ENCODE measurements at regions of chr4 and their contacts with region 1.

Region 1: GRCh38 chr4:69194166-69194565 is 20.4 kb downstream of the UGT2B11 start:
- DNase-seq: no peak
- ATAC-seq: no peak
- H3K4me3 ChIP-seq: no peak overlapping the region
- H3K4me3 Mint-ChIP-seq: no peak overlapping the region
- H3K27ac ChIP-seq: no peak overlapping the region
- H3K27ac Mint-ChIP-seq: no peak overlapping the region
- H3K4me1 ChIP-seq: no peaks in the 10 kb centered on the region
- H3K4me1 Mint-ChIP-seq: no peaks in the 10 kb centered on the region
- H3K27me3 ChIP-seq: no peaks in the 10 kb centered on the region
- H3K27me3 Mint-ChIP-seq: no peaks in the 10 kb centered on the region
- CTCF ChIP-seq: no peak

Region 2: GRCh38 chr4:68984947-68985346 is 209.2 kb before region 1 on chr4:
- CTCF ChIA-PET with region 1: no interaction called
- POLR2A ChIA-PET with region 1: no interaction called
- intact Hi-C with region 1: no loop called
- DNase-seq: no peak
- ATAC-seq: no peak
- H3K4me3 ChIP-seq: no peak overlapping the region
- H3K4me3 Mint-ChIP-seq: no peak overlapping the region
- H3K27ac ChIP-seq: no peak overlapping the region
- H3K27ac Mint-ChIP-seq: no peak overlapping the region
- H3K4me1 ChIP-seq: no peaks in the 10 kb centered on the region
- H3K4me1 Mint-ChIP-seq: no peaks in the 10 kb centered on the region
- H3K27me3 ChIP-seq: no peaks in the 10 kb centered on the region
- H3K27me3 Mint-ChIP-seq: no peaks in the 10 kb centered on the region
- CTCF ChIP-seq: no peak

Region 3: GRCh38 chr4:69133993-69134392 is 60.2 kb before region 1 on chr4:
- CTCF ChIA-PET with region 1: no interaction called
- POLR2A ChIA-PET with region 1: no interaction called
- intact Hi-C with region 1: no loop called
- DNase-seq: no peak
- ATAC-seq: no peak
- H3K4me3 ChIP-seq: no peak overlapping the region
- H3K4me3 Mint-ChIP-seq: no peak overlapping the region
- H3K27ac ChIP-seq: no peak overlapping the region
- H3K27ac Mint-ChIP-seq: no peak overlapping the region
- H3K4me1 ChIP-seq: no peaks in the 10 kb centered on the region
- H3K4me1 Mint-ChIP-seq: no peaks in the 10 kb centered on the region
- H3K27me3 ChIP-seq: no peaks in the 10 kb centered on the region
- H3K27me3 Mint-ChIP-seq: no peaks in the 10 kb centered on the region
- CTCF ChIP-seq: no peak

Region 4: DNA sequence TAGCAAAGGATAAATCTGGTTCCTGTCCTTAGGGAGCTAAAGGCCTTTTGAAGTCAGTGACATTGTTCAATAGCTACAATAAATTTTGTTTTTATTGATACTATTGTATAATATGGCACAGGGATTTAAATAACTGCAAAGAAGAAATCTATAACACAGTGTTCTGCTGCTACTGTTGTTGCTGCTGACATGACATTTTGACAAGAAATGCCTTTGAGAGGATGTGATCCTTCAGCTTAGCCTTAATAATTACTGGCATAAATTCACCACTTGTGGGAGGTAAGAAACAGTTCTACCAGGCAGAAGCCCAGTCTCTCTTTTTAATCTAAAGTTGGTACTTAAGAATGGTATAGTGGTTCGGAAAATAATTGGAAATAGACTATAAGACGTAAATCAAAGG is 661.7 kb after region 1 on chr4:
- CTCF ChIA-PET with region 1: no interaction called
- POLR2A ChIA-PET with region 1: interaction called, 13 read pairs
- intact Hi-C with region 1: no loop called
- DNase-seq: no peak
- ATAC-seq: no peak
- H3K4me3 ChIP-seq: no peak overlapping the region
- H3K4me3 Mint-ChIP-seq: no peak overlapping the region
- H3K27ac ChIP-seq: no peak overlapping the region
- H3K27ac Mint-ChIP-seq: no peak overlapping the region
- H3K4me1 ChIP-seq: no peaks in the 10 kb centered on the region
- H3K4me1 Mint-ChIP-seq: no peaks in the 10 kb centered on the region
- H3K27me3 ChIP-seq: no peaks in the 10 kb centered on the region
- H3K27me3 Mint-ChIP-seq: no peaks in the 10 kb centered on the region
- CTCF ChIP-seq: no peak

Region 5: DNA sequence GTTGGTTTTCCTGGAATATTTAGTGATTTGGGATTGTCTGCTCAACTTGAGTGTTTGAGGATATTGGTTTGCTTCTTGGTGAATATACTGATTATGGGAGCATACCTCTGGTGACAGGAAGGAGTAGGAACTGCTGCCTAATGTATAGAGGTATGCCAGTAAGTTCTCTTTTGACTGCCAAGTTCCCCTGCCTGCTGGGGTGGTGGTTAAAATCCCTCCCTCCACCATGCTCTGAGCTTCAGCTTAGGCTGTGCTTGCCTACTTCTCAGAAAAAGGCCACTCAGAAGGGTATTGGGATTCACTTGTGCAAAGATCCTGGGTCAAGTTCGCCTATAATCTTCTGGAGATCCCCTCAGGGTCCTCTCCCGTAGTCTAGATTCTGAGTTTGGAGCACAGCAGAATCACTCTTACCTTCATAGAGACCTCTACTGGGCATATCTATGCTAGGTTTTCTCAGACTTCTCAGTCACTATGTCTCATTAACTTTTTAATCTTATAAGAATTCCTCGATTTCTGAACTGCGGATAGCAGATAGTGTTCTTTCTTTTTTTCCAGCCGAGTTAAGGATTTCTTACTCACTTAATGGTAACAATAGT is 1754.6 kb after region 1 on chr4:
- CTCF ChIA-PET with region 1: no interaction called
- POLR2A ChIA-PET with region 1: no interaction called
- intact Hi-C with region 1: no loop called
- DNase-seq: peak; percentile 14
- ATAC-seq: peak; percentile 36
- H3K4me3 ChIP-seq: no peak overlapping the region
- H3K4me3 Mint-ChIP-seq: peak overlapping the region; percentile 18
- H3K27ac ChIP-seq: no peak overlapping the region
- H3K27ac Mint-ChIP-seq: no peak overlapping the region
- H3K4me1 ChIP-seq: peaks cover 19 to 20% of the 10 kb centered on the region in 2 donors
- H3K4me1 Mint-ChIP-seq: peaks cover 25% of the 10 kb centered on the region
- H3K27me3 ChIP-seq: no peaks in the 10 kb centered on the region
- H3K27me3 Mint-ChIP-seq: no peaks in the 10 kb centered on the region
- CTCF ChIP-seq: peak; percentile 26